ENCODE measurements at regions of chr5 and their contacts with region 1.

Region 1: DNA sequence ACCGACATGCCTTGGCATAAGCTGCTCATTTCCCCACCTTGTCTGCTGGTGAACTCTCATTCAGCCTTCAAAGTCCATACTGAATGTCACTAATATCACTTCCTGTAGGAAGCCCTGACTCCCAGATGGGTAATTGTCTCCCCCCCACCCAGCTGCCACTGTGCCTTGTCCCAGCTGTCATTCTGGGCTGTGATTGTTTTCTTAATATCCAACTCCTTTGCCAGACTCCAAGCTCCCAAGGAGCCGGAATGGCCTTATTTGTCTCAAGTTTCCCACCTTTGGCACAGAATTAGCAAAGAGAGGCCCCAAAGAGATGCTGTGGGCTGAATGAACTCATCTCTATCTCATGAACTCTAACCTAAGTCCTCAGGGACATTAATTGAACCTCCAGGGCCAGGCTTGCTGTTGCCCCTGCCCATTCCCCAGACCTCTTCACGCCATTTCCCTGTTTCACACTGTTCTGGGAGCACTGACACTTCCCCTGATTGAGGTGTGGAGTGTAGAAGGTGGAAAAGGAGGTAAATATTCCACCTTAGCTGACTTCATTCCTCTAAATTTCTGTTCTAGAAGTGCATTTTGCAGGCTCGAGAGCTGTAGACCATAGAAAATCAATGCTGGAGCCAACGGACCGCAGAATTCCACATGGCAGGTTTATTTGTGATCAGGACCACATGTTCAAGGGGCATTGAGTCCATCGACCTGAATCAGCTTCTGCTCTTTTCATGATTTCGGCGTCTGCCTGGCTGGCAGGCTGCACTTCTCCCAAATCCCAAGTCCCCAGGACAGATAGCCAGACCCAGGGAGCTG is 4.9 kb upstream of the SH3PXD2B start:
- DNase-seq: no peak
- H3K4me3 ChIP-seq: no peak overlapping the region
- H3K27ac ChIP-seq: no peak overlapping the region
- H3K4me1 ChIP-seq: no peaks in the 10 kb centered on the region
- H3K27me3 ChIP-seq: no peaks in the 10 kb centered on the region
- CTCF ChIP-seq: no peak

Region 2: GRCh38 chr5:171770153-171770552 is 689.0 kb before region 1 on chr5:
- CTCF ChIA-PET with region 1: interaction called, 10 read pairs
- POLR2A ChIA-PET with region 1: no interaction called
- intact Hi-C with region 1: no loop called
- DNase-seq: no peak
- H3K4me3 ChIP-seq: no peak overlapping the region
- H3K27ac ChIP-seq: no peak overlapping the region
- H3K4me1 ChIP-seq: no peaks in the 10 kb centered on the region
- H3K27me3 ChIP-seq: peaks cover 6% of the 10 kb centered on the region
- CTCF ChIP-seq: no peak

Region 3: DNA sequence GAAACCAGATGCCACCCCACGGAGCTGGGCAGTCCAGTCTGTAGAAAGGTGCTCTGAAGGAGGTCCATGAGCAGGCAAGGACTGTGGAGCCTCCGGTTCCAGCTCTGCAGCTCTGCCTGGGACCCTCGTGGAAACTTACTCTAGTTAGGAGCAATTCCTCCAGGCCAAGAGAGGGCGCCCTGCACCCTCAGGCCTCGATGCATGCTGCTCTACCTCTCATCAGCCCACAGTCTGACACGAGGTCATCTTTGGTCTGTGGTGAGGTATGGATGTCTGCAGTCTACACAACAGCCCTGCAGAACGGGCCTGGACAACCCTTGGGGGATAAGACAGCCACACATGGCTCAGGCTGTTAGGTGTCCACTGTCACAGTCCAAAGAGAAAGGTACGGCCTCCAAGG is 125.0 kb before region 1 on chr5:
- CTCF ChIA-PET with region 1: interaction called, 18 read pairs
- POLR2A ChIA-PET with region 1: no interaction called
- intact Hi-C with region 1: no loop called
- DNase-seq: peak; percentile 10
- H3K4me3 ChIP-seq: no peak overlapping the region
- H3K27ac ChIP-seq: no peak overlapping the region
- H3K4me1 ChIP-seq: no peaks in the 10 kb centered on the region
- H3K27me3 ChIP-seq: no peaks in the 10 kb centered on the region
- CTCF ChIP-seq: peak; percentile 34; the same call in 1 of the 2 replicates

Region 4: GRCh38 chr5:172437445-172438308 is 21.5 kb before region 1 on chr5:
- CTCF ChIA-PET with region 1: interaction called, 21 read pairs
- POLR2A ChIA-PET with region 1: no interaction called
- intact Hi-C with region 1: no loop called
- DNase-seq: peak; percentile 95
- H3K4me3 ChIP-seq: no peak overlapping the region
- H3K27ac ChIP-seq: peak overlapping the region; percentile 69
- H3K4me1 ChIP-seq: peaks cover 19% of the 10 kb centered on the region
- H3K27me3 ChIP-seq: no peaks in the 10 kb centered on the region
- CTCF ChIP-seq: no peak

Region 5: GRCh38 chr5:172688349-172689217 is 229.4 kb after region 1 on chr5:
- CTCF ChIA-PET with region 1: interaction called, 10 read pairs
- POLR2A ChIA-PET with region 1: no interaction called
- intact Hi-C with region 1: no loop called
- DNase-seq: no peak
- H3K4me3 ChIP-seq: no peak overlapping the region
- H3K27ac ChIP-seq: no peak overlapping the region
- H3K4me1 ChIP-seq: no peaks in the 10 kb centered on the region
- H3K27me3 ChIP-seq: no peaks in the 10 kb centered on the region
- CTCF ChIP-seq: no peak

Region 6: GRCh38 chr5:172697123-172698121 is 238.2 kb after region 1 on chr5:
- CTCF ChIA-PET with region 1: interaction called, 6 read pairs
- POLR2A ChIA-PET with region 1: no interaction called
- intact Hi-C with region 1: loop called (anchors 5 kb)
- DNase-seq: peak; percentile 82
- H3K4me3 ChIP-seq: peak overlapping the region; percentile 55
- H3K27ac ChIP-seq: peak overlapping the region; percentile 75
- H3K4me1 ChIP-seq: no peaks in the 10 kb centered on the region
- H3K27me3 ChIP-seq: no peaks in the 10 kb centered on the region
- CTCF ChIP-seq: peak; percentile 80